BJ (cell line): ENCODE measurements at regions of chr13 and their contacts with region 1.

Region 1: DNA sequence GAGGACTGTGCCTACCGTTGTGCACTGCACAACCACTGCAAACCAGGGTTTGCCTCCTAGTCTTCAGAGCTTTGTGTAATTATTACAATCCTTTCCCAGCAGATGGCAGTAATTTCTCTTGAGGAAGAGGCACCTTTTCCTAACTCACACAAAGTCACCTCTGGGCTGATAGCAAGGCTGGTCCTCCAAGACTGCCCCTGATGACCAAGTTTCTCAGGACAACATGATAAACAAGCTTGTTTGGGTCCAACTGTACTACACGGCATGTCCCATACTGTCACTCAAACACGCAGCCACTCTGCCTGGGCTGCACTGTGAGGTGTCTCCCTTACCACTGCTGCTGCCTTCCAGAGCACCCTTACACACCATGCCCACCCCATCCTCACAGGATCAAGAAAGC is 39.3 kb downstream of the RFXAP start:
- DNase-seq: peak; percentile 6
- H3K4me3 ChIP-seq: no peak overlapping the region
- H3K27me3 ChIP-seq: no peaks in the 10 kb centered on the region
- CTCF ChIP-seq: peak; percentile 54

Region 2: DNA sequence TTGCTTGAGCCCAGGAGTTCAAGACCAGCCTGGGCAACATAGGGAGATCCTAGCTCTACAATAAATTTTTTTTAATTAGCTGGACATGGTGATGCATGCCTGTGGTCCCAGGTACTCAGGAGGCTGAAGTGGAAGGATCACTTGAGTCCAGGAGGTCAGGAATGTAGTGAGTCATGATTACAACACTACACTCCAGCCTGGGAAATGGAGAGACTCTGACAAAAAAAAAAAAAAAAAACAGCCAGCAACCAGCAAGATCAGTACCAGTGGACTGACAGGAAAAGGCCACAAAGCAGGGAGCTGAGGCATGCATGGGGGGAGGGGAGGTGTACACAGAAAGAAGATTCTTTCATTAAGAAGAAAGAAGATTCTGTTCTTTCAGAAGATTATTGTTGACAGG is 92.0 kb before region 1 on chr13:
- CTCF ChIA-PET with region 1: no interaction called
- POLR2A ChIA-PET with region 1: no interaction called
- DNase-seq: peak; percentile 17
- H3K4me3 ChIP-seq: no peak overlapping the region
- H3K27me3 ChIP-seq: peaks cover 2% of the 10 kb centered on the region; the same call in 1 of the 2 replicates
- CTCF ChIP-seq: no peak

Region 3: DNA sequence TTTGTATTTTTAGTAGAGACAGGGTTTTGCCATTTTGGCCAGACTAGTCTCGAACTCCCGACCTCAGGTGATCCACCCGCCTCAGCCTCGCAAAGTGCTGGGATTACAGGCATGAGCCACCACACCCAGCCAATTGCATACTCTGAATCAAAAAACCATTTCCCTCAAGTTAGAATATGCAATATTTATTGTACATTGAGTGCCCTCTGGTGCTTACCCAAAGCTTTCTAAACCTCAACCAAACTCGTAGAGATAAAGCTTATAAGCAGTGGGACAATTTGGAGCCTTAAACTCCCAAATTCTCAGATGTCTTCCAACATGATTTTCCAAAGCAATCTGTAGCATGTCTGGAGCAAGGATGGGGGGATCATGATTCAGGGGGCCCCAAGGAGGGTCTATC is 16.9 kb before region 1 on chr13:
- CTCF ChIA-PET with region 1: interaction called, 11 read pairs
- POLR2A ChIA-PET with region 1: no interaction called
- DNase-seq: no peak
- H3K4me3 ChIP-seq: no peak overlapping the region
- H3K27me3 ChIP-seq: no peaks in the 10 kb centered on the region
- CTCF ChIP-seq: no peak

Region 4: DNA sequence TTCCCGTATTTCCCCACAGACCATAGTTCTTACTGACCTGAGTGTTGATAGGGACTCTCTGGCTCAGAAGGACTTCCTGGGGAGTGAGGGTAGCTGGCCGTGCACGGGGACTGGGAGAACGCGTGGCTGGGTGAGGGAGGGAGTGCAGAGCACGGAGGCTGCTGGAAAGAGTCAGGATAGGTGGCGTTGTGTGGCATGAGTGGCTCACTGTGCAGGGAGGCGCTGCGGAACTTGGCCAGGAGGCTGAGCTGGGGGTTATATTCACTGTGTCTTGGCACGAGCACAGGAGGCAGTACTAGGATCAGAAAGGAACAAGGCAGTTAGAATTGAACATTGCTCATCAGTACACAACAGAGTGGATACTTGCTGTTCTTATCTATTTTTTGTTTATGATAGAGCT is 14.3 kb after region 1 on chr13:
- CTCF ChIA-PET with region 1: interaction called, 51 read pairs
- POLR2A ChIA-PET with region 1: no interaction called
- DNase-seq: no peak
- H3K4me3 ChIP-seq: no peak overlapping the region
- H3K27me3 ChIP-seq: no peaks in the 10 kb centered on the region
- CTCF ChIP-seq: no peak

Region 5: GRCh38 chr13:36981156-36981743 is 123.0 kb after region 1 on chr13:
- CTCF ChIA-PET with region 1: interaction called, 105 read pairs
- POLR2A ChIA-PET with region 1: no interaction called
- DNase-seq: peak; percentile 36
- H3K4me3 ChIP-seq: no peak overlapping the region
- H3K27me3 ChIP-seq: no peaks in the 10 kb centered on the region
- CTCF ChIP-seq: peak; percentile 46

Region 6: GRCh38 chr13:37429976-37430375 is 571.7 kb after region 1 on chr13:
- CTCF ChIA-PET with region 1: no interaction called
- POLR2A ChIA-PET with region 1: no interaction called
- DNase-seq: peak; percentile 62
- H3K4me3 ChIP-seq: no peak overlapping the region
- H3K27me3 ChIP-seq: no peaks in the 10 kb centered on the region
- CTCF ChIP-seq: no peak